ENCODE measurements at regions of chr4 and their contacts with region 1.

Region 1: DNA sequence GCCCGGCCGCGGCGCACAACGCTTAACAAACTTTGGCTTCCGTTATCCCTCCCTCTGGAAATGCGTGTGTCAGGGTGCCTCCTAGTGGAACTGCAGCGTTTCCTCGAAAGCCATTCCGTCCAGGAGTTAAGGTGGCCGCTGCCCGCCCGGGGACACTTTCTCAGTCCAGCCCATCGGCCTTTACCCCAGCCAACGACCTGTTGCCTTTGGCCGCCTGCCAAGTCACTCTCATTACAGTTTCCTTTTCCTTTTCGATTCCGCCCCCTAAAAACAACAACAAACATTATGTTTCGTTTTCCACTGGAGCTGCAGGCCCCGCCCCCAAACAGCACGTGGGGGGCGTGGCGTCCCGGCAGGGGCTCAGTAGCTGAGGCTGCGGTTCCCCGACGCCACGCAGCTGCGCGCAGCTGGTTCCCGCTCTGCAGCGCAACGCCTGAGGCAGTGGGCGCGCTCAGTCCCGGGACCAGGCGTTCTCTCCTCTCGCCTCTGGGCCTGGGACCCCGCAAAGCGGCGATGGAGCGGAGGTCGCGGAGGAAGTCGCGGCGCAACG is at the start of gene HERC5:
- DNase-seq: peak; percentile 96
- ATAC-seq: peak; percentile 94 to 97
- total RNA-seq, gene HERC5: 2.4 to 3.7 TPM

Region 2: GRCh38 chr4:88240297-88240714 is 216.5 kb before region 1 on chr4:
- intact Hi-C with region 1: no loop called
- DNase-seq: peak; percentile 64
- ATAC-seq: peak; percentile 93 to 96

Region 3: DNA sequence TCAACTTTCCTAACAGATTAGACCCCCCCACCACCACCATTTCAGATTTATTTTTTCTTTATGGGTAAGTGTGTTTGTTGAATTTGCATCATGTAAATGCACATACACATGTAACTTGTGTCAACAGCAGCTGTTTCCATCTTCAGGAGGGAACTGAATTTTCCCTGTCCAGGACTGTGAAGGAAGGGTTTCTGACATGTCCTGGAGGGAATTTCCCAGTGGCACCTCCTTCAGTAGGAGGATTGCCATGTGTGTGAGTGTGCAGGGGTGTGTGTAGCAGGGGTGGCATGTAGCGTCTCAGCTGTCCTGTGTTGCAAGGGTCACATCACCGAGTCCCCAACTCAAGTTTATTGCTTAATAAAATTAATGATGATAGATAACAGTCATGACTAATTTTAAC is 58.5 kb before region 1 on chr4:
- intact Hi-C with region 1: loop called in 1 of 2 experiments (anchors 10 kb)
- DNase-seq: no peak
- ATAC-seq: no peak

Measured in left cardiac atrium (tissue), 4 donors.